CD4-positive, alpha-beta T cell (primary cell): ENCODE measurements at regions of chr1 and their contacts with region 1.

Region 1: DNA sequence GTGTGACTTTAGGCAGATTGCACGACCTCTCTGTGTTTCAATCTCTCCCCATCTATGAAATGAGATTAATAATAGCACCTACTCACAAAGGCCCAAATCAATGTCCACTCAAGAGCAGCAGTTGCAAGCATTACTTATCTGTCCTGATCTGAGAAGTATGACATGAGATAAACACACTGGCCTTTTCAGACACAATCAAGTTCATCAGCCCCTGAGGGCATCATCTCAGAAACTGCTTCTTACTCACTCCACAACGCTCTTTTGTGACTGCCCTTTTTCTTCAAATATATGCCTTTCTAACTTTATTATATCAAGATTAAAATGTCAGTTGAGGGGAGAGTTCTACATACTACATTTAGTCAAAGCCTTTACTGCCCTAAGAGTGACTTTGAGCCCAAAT is 371.9 kb upstream of the SPAG17 start:
- DNase-seq: no peak
- ATAC-seq: no peak
- H3K4me3 ChIP-seq: no peak overlapping the region
- H3K4me3 Mint-ChIP-seq: no peak overlapping the region
- H3K27ac ChIP-seq: no peak overlapping the region
- H3K27ac Mint-ChIP-seq: no peak overlapping the region
- H3K4me1 ChIP-seq: no peaks in the 10 kb centered on the region
- H3K4me1 Mint-ChIP-seq: no peaks in the 10 kb centered on the region
- H3K27me3 ChIP-seq: no peaks in the 10 kb centered on the region
- H3K27me3 Mint-ChIP-seq: no peaks in the 10 kb centered on the region
- CTCF ChIP-seq: no peak

Region 2: DNA sequence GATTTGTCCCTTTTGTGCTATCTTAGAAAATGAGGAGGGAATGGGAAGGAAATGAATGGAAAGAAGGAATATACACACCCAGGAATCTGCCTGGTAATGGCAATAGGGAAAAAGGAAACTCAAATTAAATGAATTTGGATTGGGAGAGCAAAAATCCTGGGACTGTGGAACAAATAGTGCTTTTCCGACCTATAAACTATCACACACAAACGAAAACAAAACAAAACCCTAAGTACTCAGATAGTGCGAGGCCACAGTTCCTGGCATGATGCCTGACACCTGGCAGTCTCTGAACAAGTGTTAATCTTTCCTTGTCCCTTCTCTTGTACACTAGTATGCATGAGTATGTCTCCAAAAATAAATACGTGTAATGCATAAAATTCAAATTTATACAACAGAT is 52.1 kb before region 1 on chr1:
- CTCF ChIA-PET with region 1: no interaction called
- POLR2A ChIA-PET with region 1: no interaction called
- intact Hi-C with region 1: loop called in 1 of 2 experiments (anchors 5 kb)
- DNase-seq: no peak
- ATAC-seq: no peak
- H3K4me3 ChIP-seq: no peak overlapping the region
- H3K4me3 Mint-ChIP-seq: no peak overlapping the region
- H3K27ac ChIP-seq: no peak overlapping the region
- H3K27ac Mint-ChIP-seq: no peak overlapping the region
- H3K4me1 ChIP-seq: no peaks in the 10 kb centered on the region
- H3K4me1 Mint-ChIP-seq: no peaks in the 10 kb centered on the region
- H3K27me3 ChIP-seq: no peaks in the 10 kb centered on the region
- H3K27me3 Mint-ChIP-seq: no peaks in the 10 kb centered on the region
- CTCF ChIP-seq: no peak